AG04450 (cell line): ENCODE measurements at regions of chr6 and their contacts with region 1.

Region 1: DNA sequence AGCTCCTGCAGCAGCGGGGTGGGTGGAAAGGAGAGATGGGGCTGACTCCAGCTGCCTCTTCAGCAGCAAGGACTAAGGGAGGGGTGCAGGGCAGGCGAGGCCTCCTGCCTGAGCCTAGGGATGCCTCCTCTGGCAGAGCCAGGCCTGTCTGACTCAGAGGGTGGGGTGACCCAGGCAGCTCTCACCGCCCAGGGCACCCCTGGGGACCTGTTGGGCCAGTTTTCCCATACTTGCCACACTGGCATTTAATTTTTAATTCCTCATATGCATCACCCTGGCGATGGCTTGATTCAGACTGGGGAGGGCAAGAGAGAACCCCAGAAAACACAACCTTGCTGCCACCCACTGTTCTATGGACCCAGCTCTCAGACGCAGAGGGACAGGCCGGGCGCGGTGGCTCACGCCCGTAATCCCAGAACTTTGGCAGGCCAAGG is 19.7 kb downstream of the C6orf132 start:
- DNase-seq: no peak
- H3K4me3 ChIP-seq: no peak overlapping the region
- H3K27ac ChIP-seq: no peak overlapping the region
- H3K27me3 ChIP-seq: no peaks in the 10 kb centered on the region
- CTCF ChIP-seq: no peak

Region 2: GRCh38 chr6:42190554-42191183 is 67.9 kb after region 1 on chr6:
- CTCF ChIA-PET with region 1: interaction called, 11 read pairs
- POLR2A ChIA-PET with region 1: no interaction called
- DNase-seq: peak; percentile 69
- H3K4me3 ChIP-seq: no peak overlapping the region
- H3K27ac ChIP-seq: peak overlapping the region; percentile 73
- H3K27me3 ChIP-seq: no peaks in the 10 kb centered on the region
- CTCF ChIP-seq: no peak